CD8-positive, alpha-beta T cell (primary cell): ENCODE measurements at regions of chr17 and their contacts with region 1.

Region 1: GRCh38 chr17:4939796-4940624 is at the starts of genes RNF167 and SLC25A11:
- DNase-seq: peak; percentile 90 to 100 (median 95)
- ATAC-seq: peak; percentile 87
- H3K4me3 ChIP-seq: peak within 1 kb of the TSS; percentile 95 to 96
- H3K4me3 Mint-ChIP-seq: peak within 1 kb of the TSS; percentile 92
- H3K27ac ChIP-seq: peak within 1 kb of the TSS; percentile 83 to 92
- H3K27ac Mint-ChIP-seq: peak within 1 kb of the TSS; percentile 95
- H3K4me1 ChIP-seq: peaks cover 54% of the 10 kb centered on the region
- H3K4me1 Mint-ChIP-seq: peaks cover 60% of the 10 kb centered on the region
- H3K27me3 ChIP-seq: no peaks in the 10 kb centered on the region
- H3K27me3 Mint-ChIP-seq: no peaks in the 10 kb centered on the region
- CTCF ChIP-seq: no peak
- total RNA-seq, gene RNF167: 49.3 to 52.2 TPM
- total RNA-seq, gene SLC25A11: 15.8 to 16.3 TPM

Region 2: GRCh38 chr17:4796553-4796921 is 143.5 kb before region 1 on chr17:
- CTCF ChIA-PET with region 1: no interaction called
- POLR2A ChIA-PET with region 1: no interaction called
- intact Hi-C with region 1: loop called in 1 of 2 experiments (anchors 2 kb)
- DNase-seq: peak in 2 of 9 experiments; percentile 20 to 28
- ATAC-seq: no peak
- H3K4me3 ChIP-seq: peak overlapping the region; percentile 70 to 73
- H3K4me3 Mint-ChIP-seq: peak overlapping the region; percentile 99
- H3K27ac ChIP-seq: peak overlapping the region; percentile 53 to 67
- H3K27ac Mint-ChIP-seq: peak overlapping the region; percentile 97
- H3K4me1 ChIP-seq: peaks cover 7% of the 10 kb centered on the region
- H3K4me1 Mint-ChIP-seq: peaks cover 13% of the 10 kb centered on the region
- H3K27me3 ChIP-seq: no peaks in the 10 kb centered on the region
- H3K27me3 Mint-ChIP-seq: peaks cover 2% of the 10 kb centered on the region
- CTCF ChIP-seq: no peak

Region 3: DNA sequence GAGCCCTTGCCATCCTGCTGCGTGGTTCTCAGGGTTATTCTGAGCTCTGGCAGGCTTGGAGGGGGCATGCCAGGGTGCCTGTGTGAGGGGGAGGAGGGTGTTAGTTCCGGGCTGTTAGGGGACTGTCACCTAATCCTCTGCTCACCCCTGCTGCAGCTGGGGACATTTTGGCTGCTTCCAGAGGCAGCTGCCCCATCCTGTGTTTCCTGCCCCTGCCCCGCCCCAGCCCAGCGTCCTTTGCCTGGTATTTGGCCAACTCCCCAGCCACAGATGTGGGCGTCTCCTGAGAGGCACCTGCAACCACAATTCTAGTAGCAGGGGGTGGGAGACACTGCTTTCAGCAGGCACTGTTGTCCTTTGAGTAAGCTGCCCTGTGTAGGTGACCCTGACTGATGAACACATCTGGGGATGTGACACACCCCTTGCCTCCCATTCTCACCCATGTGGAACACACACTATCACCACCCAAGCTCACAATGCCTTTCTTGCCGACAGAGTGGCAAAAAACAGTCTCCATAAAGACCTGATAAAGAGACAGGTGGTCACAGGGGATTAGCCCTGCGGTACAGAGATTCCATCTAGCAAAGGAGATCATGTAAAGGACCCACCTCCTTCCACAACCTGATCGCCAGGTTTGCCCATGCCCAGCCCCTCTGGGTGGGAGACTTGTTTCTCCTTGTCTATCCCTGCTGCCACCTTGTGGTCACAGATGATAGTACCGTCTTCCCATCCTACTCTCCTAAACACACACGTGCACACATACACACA is 36.8 kb before region 1 on chr17 and contains the start of gene CHRNE:
- CTCF ChIA-PET with region 1: interaction called, 11 read pairs
- POLR2A ChIA-PET with region 1: interaction called, 24 read pairs
- intact Hi-C with region 1: loop called (anchors 1 kb)
- DNase-seq: peak; percentile 52 to 92 (median 79)
- ATAC-seq: peak; percentile 25
- H3K4me3 ChIP-seq: peak within 1 kb of the TSS; percentile 14 to 27
- H3K4me3 Mint-ChIP-seq: peak within 1 kb of the TSS; percentile 48
- H3K27ac ChIP-seq: peak within 1 kb of the TSS in 1 of 2 experiments; percentile 50
- H3K27ac Mint-ChIP-seq: peak within 1 kb of the TSS; percentile 76
- H3K4me1 ChIP-seq: peaks cover 51% of the 10 kb centered on the region
- H3K4me1 Mint-ChIP-seq: peaks cover 38% of the 10 kb centered on the region
- H3K27me3 ChIP-seq: no peaks in the 10 kb centered on the region
- H3K27me3 Mint-ChIP-seq: no peaks in the 10 kb centered on the region
- CTCF ChIP-seq: peak; percentile 94
- total RNA-seq, gene CHRNE: 5.5 to 6.1 TPM

Region 4: DNA sequence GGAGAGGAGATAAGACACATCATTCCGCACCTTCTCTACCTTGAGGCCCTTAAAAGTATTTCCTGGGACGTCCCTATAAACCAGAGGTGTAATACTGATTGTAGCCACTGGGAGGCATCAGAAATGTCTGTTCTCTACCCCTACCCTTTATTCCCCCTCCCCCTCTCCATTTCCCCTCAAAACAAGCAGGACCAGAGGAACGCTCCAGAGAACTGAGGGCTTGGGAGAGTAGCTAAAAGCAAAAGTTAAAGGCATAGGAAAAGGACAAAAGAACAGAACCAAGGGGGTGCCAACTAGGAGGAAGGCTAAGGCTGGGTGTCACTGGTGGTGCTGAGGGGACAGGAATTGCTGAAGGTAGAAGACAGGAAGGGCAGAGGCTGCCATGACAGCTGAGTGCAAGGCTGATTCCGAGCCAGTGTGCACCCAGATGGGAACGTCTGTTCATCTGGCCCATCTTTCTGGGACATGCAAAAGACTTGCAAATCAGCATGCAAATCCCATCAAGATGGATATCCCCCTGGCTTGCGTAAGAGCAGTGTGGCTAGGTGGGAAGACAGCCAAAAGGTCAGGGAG is 40.7 kb after region 1 on chr17:
- CTCF ChIA-PET with region 1: interaction called, 14 read pairs
- POLR2A ChIA-PET with region 1: interaction called, 3 read pairs
- intact Hi-C with region 1: no loop called
- DNase-seq: peak in 4 of 9 experiments; percentile 50 to 80 (median 67)
- ATAC-seq: peak; percentile 98
- H3K4me3 ChIP-seq: no peak overlapping the region
- H3K4me3 Mint-ChIP-seq: peak overlapping the region; percentile 23
- H3K27ac ChIP-seq: no peak overlapping the region
- H3K27ac Mint-ChIP-seq: no peak overlapping the region
- H3K4me1 ChIP-seq: peaks cover 9% of the 10 kb centered on the region
- H3K4me1 Mint-ChIP-seq: peaks cover 19% of the 10 kb centered on the region
- H3K27me3 ChIP-seq: no peaks in the 10 kb centered on the region
- H3K27me3 Mint-ChIP-seq: no peaks in the 10 kb centered on the region
- CTCF ChIP-seq: peak; percentile 87

Region 5: DNA sequence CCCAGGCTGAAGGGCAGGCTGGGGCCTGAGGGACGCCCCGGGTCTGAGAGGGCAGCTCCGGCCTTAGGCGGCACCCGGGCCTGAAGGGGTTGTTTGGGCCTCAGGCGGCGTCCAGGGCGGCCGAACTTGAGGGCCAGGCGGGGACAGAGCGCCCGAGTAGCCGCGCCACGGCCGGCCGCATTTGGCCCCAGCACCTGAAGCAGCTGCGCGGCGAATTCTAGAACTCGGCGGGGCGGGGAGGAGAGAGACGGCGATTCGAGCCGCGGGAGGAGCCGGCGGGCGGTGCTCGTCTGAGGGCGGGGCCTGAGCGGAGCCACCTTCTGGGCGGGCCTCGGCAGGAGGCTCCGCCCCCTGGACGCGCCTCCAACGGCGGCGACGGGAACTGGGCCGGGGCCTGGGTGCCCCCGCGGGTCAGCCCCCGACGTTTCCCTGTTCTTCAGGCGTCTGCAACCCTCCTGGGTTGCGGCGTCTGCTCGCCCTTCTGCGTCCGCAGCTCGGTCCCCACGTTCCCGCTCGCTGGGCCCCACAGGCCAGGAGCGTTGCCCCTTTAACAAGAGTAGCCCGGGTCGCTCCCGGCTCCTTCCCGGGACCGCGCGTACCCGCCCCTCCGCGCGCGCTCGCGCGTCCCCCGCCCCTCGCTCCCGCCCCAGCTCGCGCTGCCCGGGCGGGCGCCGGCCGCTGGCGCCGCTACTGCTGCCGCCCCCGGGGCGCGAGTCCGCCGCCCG is 57.5 kb after region 1 on chr17 and contains the starts of genes INCA1 and KIF1C:
- CTCF ChIA-PET with region 1: no interaction called
- POLR2A ChIA-PET with region 1: interaction called, 13 read pairs
- intact Hi-C with region 1: loop called in 1 of 2 experiments (anchors 1 kb)
- DNase-seq: peak; percentile 78 to 95 (median 90)
- ATAC-seq: peak; percentile 97
- H3K4me3 ChIP-seq: peak within 1 kb of the TSS; percentile 59 to 89
- H3K4me3 Mint-ChIP-seq: peak within 1 kb of the TSS; percentile 83
- H3K27ac ChIP-seq: peak within 1 kb of the TSS; percentile 56
- H3K27ac Mint-ChIP-seq: peak within 1 kb of the TSS; percentile 84
- H3K4me1 ChIP-seq: peaks cover 20% of the 10 kb centered on the region
- H3K4me1 Mint-ChIP-seq: peaks cover 23% of the 10 kb centered on the region
- H3K27me3 ChIP-seq: no peaks in the 10 kb centered on the region
- H3K27me3 Mint-ChIP-seq: no peaks in the 10 kb centered on the region
- CTCF ChIP-seq: no peak
- total RNA-seq, gene INCA1: 0.24 TPM in 1 of 2 experiments, not detected in the other
- total RNA-seq, gene KIF1C: 7.1 to 7.2 TPM